Ovary (tissue), 10 donors: ENCODE measurements at regions of chr1 and their contacts with region 1.

Region 1: DNA sequence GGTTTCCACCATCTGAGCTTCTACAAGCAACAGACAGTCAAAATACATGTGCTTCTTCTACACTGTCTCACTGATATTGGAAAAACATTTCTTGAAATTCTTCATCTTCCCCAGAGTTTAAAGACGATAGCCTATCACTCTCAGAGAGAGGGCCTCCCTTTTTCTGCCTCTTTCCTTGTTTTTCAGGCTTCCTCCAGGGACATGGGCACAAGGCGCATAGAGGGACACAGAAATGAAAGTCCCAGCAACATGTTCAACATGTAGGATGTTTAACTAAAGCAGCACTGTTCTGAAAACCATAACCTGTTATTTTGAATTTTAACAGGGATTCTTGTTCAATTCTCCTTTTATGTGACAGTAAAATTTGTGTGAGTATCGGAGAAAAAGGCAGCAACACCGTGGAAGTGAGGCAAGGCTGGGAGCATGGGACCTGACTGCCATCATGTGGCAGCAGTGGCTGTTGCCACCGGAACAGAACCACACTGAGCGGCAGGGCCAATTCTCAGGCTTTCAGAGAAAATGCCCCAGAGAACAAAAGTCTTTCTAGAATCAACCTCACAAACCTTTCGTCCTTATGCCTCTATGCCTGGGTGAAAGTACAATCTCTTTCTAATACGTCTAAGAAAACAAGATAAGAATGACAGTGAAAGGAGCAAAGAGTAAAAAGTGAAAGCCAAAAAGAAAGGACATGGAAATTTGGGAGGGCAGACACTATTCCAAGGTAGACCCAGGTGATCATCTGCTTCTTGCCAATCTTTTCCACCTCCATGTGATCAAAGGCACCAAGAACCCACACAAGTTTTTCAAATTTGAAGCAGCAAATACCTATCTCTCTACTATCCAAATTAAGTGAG is 54.5 kb downstream of the PCNX2 start:
- DNase-seq: peak; percentile 17 to 67 (median 55)
- H3K4me3 ChIP-seq: no peak overlapping the region
- H3K27ac ChIP-seq: no peak overlapping the region
- H3K4me1 ChIP-seq: no peaks in the 10 kb centered on the region
- H3K27me3 ChIP-seq: no peaks in the 10 kb centered on the region
- CTCF ChIP-seq: peak in 2 of 3 donors; percentile 25 to 46
- EP300 ChIP-seq: no peak
- POLR2A ChIP-seq: no peak

Region 2: GRCh38 chr1:232630047-232630893 is 610.8 kb before region 1 on chr1 and contains the start of gene SIPA1L2:
- intact Hi-C with region 1: loop called in 3 of 4 experiments (anchors 5 to 10 kb)
- DNase-seq: peak; percentile 93 to 97 (median 96)
- H3K4me3 ChIP-seq: peak within 1 kb of the TSS; percentile 73
- H3K27ac ChIP-seq: peak within 1 kb of the TSS; percentile 69 to 89
- H3K4me1 ChIP-seq: no peaks in the 10 kb centered on the region
- H3K27me3 ChIP-seq: no peaks in the 10 kb centered on the region
- CTCF ChIP-seq: peak; percentile 7 to 46 (median 40)
- EP300 ChIP-seq: no peak
- POLR2A ChIP-seq: no peak
- total RNA-seq, gene SIPA1L2: 12.9 to 52.9 (median 31.7) TPM

Region 3: GRCh38 chr1:232635778-232636356 is 605.2 kb before region 1 on chr1:
- intact Hi-C with region 1: loop called in 3 of 4 experiments (anchors 5 to 10 kb)
- DNase-seq: no peak
- H3K4me3 ChIP-seq: no peak overlapping the region
- H3K27ac ChIP-seq: no peak overlapping the region
- H3K4me1 ChIP-seq: no peaks in the 10 kb centered on the region
- H3K27me3 ChIP-seq: no peaks in the 10 kb centered on the region
- CTCF ChIP-seq: peak; percentile 57 to 76 (median 74)
- EP300 ChIP-seq: no peak
- POLR2A ChIP-seq: no peak

Region 4: GRCh38 chr1:233217832-233218231 is 23.2 kb before region 1 on chr1:
- intact Hi-C with region 1: no loop called
- DNase-seq: peak in 1 of 5 donors; percentile 42
- H3K4me3 ChIP-seq: no peak overlapping the region
- H3K27ac ChIP-seq: no peak overlapping the region
- H3K4me1 ChIP-seq: no peaks in the 10 kb centered on the region
- H3K27me3 ChIP-seq: no peaks in the 10 kb centered on the region
- CTCF ChIP-seq: no peak
- EP300 ChIP-seq: no peak
- POLR2A ChIP-seq: no peak